ENCODE measurements at regions of chr7 and their contacts with region 1.

Region 1: DNA sequence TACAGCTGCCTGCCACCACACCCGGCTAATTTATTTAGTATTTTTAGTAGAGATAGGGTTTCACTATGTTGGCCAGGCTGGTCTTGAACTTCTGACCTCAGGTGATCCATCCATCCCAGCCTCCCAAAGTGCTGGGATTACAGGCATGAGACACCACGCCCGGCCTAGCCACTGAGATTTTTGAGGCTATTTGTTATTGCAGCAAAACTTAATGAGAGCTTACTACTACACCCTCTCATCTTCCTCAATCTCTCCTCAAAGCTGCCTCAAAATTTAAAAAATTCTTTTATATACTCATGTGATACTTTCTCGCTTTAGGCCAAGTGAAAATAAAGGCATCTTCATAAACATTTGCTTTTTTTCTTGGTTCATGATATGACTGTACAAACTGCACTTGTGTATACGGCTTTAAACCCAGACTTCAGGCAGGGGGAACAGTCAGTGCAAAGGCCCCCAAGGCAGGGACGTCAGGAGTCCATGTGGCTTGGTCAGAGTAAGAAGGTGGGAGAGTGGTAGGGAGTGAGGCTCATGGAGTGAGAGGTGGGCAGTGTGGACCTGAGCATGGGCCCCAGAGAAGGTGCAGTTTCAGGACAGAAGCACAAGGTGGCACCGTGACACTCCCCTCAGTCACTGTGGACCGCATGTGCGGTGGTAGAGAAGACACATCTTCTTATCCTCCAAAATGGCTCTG is 55.5 kb downstream of the SYPL1 start:
- DNase-seq: peak; percentile 62
- ATAC-seq: peak; percentile 93
- H3K4me3 ChIP-seq: no peak overlapping the region
- H3K27ac ChIP-seq: no peak overlapping the region
- H3K4me1 ChIP-seq: peaks cover 33% of the 10 kb centered on the region
- H3K27me3 ChIP-seq: peaks cover 0 to 17% of the 10 kb centered on the region in 2 experiments; a peak in 2 of 5 replicates
- CTCF ChIP-seq: peak; percentile 96
- EP300 ChIP-seq: no peak
- POLR2A ChIP-seq: no peak
- RAD21 ChIP-seq: peak; percentile 92

Region 2: DNA sequence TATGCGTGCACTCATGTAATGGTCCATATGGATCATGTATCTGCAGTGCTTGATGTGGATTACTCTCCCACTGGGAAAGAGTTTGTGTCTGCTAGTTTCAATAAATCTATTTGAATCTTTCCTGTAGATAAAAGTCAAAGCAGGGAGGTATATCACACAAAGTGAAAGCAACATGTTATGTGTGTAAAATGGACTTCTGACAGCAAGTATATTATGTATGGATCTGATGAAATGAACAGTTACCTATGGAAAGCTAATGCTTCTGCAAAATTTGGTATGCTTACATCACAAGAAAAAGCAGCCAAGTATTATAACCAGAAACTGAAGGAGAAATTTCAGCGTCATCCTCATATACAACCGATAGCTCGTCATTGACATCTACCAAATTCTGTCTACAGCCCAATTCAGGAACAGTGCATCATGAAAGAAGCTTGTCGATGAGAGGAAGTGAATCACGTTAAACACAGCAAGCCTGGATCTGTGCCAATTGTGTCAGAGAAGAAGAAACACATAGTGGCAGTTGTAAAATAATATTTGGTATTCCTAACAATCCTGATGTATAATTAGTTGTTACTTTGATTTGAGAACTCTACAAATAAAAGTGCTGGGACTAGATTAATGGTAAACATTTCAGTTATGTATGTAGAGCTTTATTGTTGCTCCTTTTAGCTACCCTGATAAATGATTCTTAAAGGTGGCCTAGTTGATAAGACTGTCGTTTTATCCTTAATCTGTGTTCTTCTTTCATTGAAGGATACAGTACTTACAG is 69.7 kb after region 1 on chr7:
- CTCF ChIA-PET with region 1: no interaction called
- POLR2A ChIA-PET with region 1: no interaction called
- in situ Hi-C with region 1: no loop called
- intact Hi-C with region 1: no loop called
- DNase-seq: no peak
- ATAC-seq: no peak
- H3K4me3 ChIP-seq: no peak overlapping the region
- H3K27ac ChIP-seq: no peak overlapping the region
- H3K4me1 ChIP-seq: no peaks in the 10 kb centered on the region; the same call in 1 of the 2 replicates
- H3K27me3 ChIP-seq: 0 out of 5 replicates have a peak, but pooled peaks cover 0 to 12% of the 10 kb centered on the region in 2 experiments
- CTCF ChIP-seq: no peak
- EP300 ChIP-seq: no peak
- POLR2A ChIP-seq: no peak
- RAD21 ChIP-seq: no peak

Region 3: DNA sequence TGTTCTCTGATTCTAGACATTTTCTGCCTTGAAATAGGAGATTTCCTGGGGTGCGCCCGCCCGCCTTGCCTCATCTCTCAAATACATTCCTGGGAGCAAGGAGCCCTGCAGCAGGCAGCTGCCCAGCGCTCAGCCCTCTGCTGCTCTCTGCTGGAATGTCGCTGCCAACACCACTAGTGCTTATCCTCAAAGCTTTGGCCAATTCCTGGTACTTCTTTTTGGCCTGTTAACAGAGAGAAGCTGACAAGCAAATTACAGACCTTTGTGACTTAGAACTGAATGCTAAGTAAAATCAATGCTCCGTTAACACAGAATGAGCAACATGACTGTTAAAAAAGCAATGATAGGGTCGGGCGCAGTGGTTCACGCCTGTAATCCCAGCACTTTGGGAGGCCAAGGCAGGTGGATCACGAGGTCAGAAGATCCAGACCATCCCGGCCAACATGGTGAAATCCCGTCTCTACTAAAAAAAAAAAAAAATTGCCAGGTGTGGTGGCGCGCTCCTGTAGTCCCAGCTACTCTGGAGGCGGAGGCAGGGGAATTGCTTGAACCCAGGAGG is 97.3 kb after region 1 on chr7:
- CTCF ChIA-PET with region 1: interaction called, 94 read pairs
- POLR2A ChIA-PET with region 1: no interaction called
- in situ Hi-C with region 1: loop called (anchors 5 kb)
- intact Hi-C with region 1: loop called (anchors 1 kb)
- DNase-seq: peak; percentile 54
- ATAC-seq: peak; percentile 98
- H3K4me3 ChIP-seq: no peak overlapping the region
- H3K27ac ChIP-seq: no peak overlapping the region
- H3K4me1 ChIP-seq: peaks cover 13% of the 10 kb centered on the region
- H3K27me3 ChIP-seq: peaks cover 2 to 19% of the 10 kb centered on the region in 2 experiments; a peak in 3 of 5 replicates
- CTCF ChIP-seq: peak; percentile 95
- EP300 ChIP-seq: no peak
- POLR2A ChIP-seq: no peak
- RAD21 ChIP-seq: peak; percentile 93

Region 4: GRCh38 chr7:106166655-106167342 is 110.1 kb after region 1 on chr7:
- CTCF ChIA-PET with region 1: interaction called, 6 read pairs
- POLR2A ChIA-PET with region 1: no interaction called
- in situ Hi-C with region 1: no loop called
- intact Hi-C with region 1: loop called (anchors 1 kb)
- DNase-seq: peak; percentile 62
- ATAC-seq: peak; percentile 68
- H3K4me3 ChIP-seq: no peak overlapping the region
- H3K27ac ChIP-seq: no peak overlapping the region
- H3K4me1 ChIP-seq: no peaks in the 10 kb centered on the region
- H3K27me3 ChIP-seq: peaks cover 0 to 26% of the 10 kb centered on the region in 2 experiments; a peak in 1 of 5 replicates
- CTCF ChIP-seq: peak; percentile 67
- EP300 ChIP-seq: no peak
- POLR2A ChIP-seq: no peak
- RAD21 ChIP-seq: peak; percentile 28; the same call in 1 of the 2 replicates

Region 5: DNA sequence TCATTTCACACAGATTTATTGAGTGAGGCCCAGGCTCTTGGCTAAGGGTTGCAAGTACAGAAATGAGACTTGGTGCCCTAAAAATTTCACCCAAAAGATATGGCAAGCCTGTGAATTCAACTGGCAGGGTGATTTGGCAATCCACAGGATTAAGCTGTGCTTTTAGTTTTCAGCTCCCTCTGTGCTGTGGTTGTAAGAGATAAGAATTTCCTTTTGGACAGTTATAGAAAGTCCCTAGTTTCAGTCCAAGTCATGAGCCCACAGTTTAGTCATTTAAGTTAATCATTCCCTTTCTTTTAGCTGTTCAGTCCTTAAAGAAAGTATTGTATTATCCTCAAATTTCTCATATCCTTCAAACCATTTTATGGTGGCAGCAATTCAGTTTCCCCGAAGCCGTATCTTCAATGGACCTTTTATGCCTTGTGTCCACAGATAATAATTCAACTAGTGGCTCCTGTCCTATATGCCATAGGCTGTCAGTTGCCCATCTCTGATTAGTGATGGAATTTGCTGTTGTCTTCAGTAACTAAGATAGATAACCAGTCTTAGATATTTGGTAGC is 301.5 kb after region 1 on chr7:
- CTCF ChIA-PET with region 1: no interaction called
- POLR2A ChIA-PET with region 1: no interaction called
- in situ Hi-C with region 1: no loop called
- intact Hi-C with region 1: no loop called
- DNase-seq: no peak
- ATAC-seq: no peak
- H3K4me3 ChIP-seq: no peak overlapping the region
- H3K27ac ChIP-seq: no peak overlapping the region
- H3K4me1 ChIP-seq: no peaks in the 10 kb centered on the region
- H3K27me3 ChIP-seq: no peaks in the 10 kb centered on the region
- CTCF ChIP-seq: no peak
- EP300 ChIP-seq: no peak
- POLR2A ChIP-seq: no peak
- RAD21 ChIP-seq: no peak

Region 6: GRCh38 chr7:106461993-106462859 is 405.6 kb after region 1 on chr7:
- CTCF ChIA-PET with region 1: no interaction called
- POLR2A ChIA-PET with region 1: no interaction called
- in situ Hi-C with region 1: no loop called
- intact Hi-C with region 1: loop called (anchors 10 kb)
- DNase-seq: peak; percentile 10
- ATAC-seq: no peak
- H3K4me3 ChIP-seq: no peak overlapping the region
- H3K27ac ChIP-seq: no peak overlapping the region
- H3K4me1 ChIP-seq: no peaks in the 10 kb centered on the region
- H3K27me3 ChIP-seq: no peaks in the 10 kb centered on the region; a peak in 1 of 5 replicates
- CTCF ChIP-seq: peak; percentile 41
- EP300 ChIP-seq: no peak
- POLR2A ChIP-seq: no peak
- RAD21 ChIP-seq: no peak

Region 7: GRCh38 chr7:106779877-106780276 is 723.2 kb after region 1 on chr7:
- CTCF ChIA-PET with region 1: no interaction called
- POLR2A ChIA-PET with region 1: no interaction called
- in situ Hi-C with region 1: no loop called
- intact Hi-C with region 1: no loop called
- DNase-seq: peak; percentile 46
- ATAC-seq: peak; percentile 100
- H3K4me3 ChIP-seq: no peak overlapping the region
- H3K27ac ChIP-seq: no peak overlapping the region
- H3K4me1 ChIP-seq: no peaks in the 10 kb centered on the region
- H3K27me3 ChIP-seq: no peaks in the 10 kb centered on the region
- CTCF ChIP-seq: peak; percentile 62
- EP300 ChIP-seq: no peak
- POLR2A ChIP-seq: no peak
- RAD21 ChIP-seq: no peak